ENCODE measurements at regions of chr1 and their contacts with region 1.

Region 1: GRCh38 chr1:248013229-248013710 is at the start of gene OR2L5:
- DNase-seq: no peak
- H3K4me3 ChIP-seq: no peak within 1 kb of the TSS
- H3K27ac ChIP-seq: no peak within 1 kb of the TSS
- H3K4me1 ChIP-seq: no peaks in the 10 kb centered on the region
- H3K27me3 ChIP-seq: no peaks in the 10 kb centered on the region
- CTCF ChIP-seq: no peak
- EP300 ChIP-seq: no peak
- POLR2A ChIP-seq: no peak
- total RNA-seq, gene OR2L5: 0.32 TPM in 1 of 4 donors, not detected in the others

Region 2: GRCh38 chr1:247749870-247750269 is 263.4 kb before region 1 on chr1:
- in situ Hi-C with region 1: no loop called
- intact Hi-C with region 1: no loop called
- DNase-seq: no peak
- H3K4me3 ChIP-seq: no peak overlapping the region
- H3K27ac ChIP-seq: no peak overlapping the region
- H3K4me1 ChIP-seq: no peaks in the 10 kb centered on the region
- H3K27me3 ChIP-seq: no peaks in the 10 kb centered on the region
- CTCF ChIP-seq: no peak
- EP300 ChIP-seq: no peak
- POLR2A ChIP-seq: no peak

Region 3: GRCh38 chr1:248793592-248793991 is 780.3 kb after region 1 on chr1:
- in situ Hi-C with region 1: no loop called
- intact Hi-C with region 1: loop called (anchors 5 kb)
- DNase-seq: no peak
- H3K4me3 ChIP-seq: no peak overlapping the region
- H3K27ac ChIP-seq: no peak overlapping the region
- H3K4me1 ChIP-seq: peaks cover 0 to 4% (median under 1%) of the 10 kb centered on the region in 4 donors
- H3K27me3 ChIP-seq: no peaks in the 10 kb centered on the region
- CTCF ChIP-seq: no peak
- EP300 ChIP-seq: no peak
- POLR2A ChIP-seq: no peak